ENCODE measurements at regions of chr4 and their contacts with region 1.

Region 1: DNA sequence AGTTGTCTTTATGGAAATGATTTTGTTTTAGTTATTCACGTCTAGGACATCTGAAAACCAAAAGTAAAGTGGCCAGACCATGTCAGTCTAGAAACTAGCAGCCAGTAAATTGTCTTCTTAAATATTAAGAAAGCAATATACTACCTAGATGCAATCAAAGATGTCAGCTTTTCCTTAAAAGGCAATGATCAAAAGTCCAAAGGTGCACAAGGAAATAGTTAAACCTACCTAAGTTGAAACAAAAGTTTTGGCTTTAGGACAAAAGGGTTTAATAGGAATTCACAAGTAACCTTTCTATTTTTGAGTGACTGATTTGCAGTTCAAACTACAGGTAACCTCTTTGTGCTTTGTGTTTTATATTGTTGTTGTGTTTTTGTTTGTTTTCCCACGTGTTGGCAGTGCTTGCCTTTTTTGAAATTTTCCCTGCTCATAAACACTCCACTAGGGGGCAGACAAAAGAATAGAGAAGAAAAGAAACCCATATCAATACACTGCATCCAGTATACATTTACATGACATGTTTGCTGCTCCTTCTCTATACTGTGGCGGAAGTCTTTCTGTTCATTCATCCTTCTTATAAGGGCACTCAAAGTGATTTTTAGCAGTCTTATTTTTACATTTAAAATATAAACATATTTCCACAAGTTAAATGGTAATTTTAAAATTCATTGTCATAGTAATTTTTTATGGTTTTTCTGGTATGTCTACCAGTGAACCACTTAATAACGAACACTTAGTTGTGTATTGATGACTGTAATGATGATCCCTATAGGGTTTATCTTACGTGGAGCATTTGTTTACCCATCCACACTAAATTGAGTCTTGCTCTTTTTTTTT is 62.7 kb downstream of the GAB1 start:
- DNase-seq: no peak
- H3K4me3 Mint-ChIP-seq: no peak overlapping the region
- H3K27ac Mint-ChIP-seq: no peak overlapping the region
- H3K4me1 Mint-ChIP-seq: peaks cover 11% of the 10 kb centered on the region
- H3K27me3 Mint-ChIP-seq: peaks cover 17% of the 10 kb centered on the region

Region 2: GRCh38 chr4:143482840-143483239 is 83.5 kb after region 1 on chr4:
- intact Hi-C with region 1: loop called (anchors 5 kb)
- DNase-seq: no peak
- H3K4me3 Mint-ChIP-seq: no peak overlapping the region
- H3K27ac Mint-ChIP-seq: no peak overlapping the region
- H3K4me1 Mint-ChIP-seq: no peaks in the 10 kb centered on the region
- H3K27me3 Mint-ChIP-seq: peaks cover 4% of the 10 kb centered on the region